Gastrocnemius medialis (tissue), 4 donors: ENCODE measurements at regions of chr19 and their contacts with region 1.

Region 1: GRCh38 chr19:34974646-34975045 is 10.6 kb upstream of the ZNF792 start:
- DNase-seq: no peak
- ATAC-seq: no peak
- H3K4me3 ChIP-seq: no peak overlapping the region
- H3K27ac ChIP-seq: no peak overlapping the region
- H3K4me1 ChIP-seq: peaks cover 3 to 7% of the 10 kb centered on the region in 2 donors
- H3K27me3 ChIP-seq: no peaks in the 10 kb centered on the region
- CTCF ChIP-seq: no peak
- POLR2A ChIP-seq: no peak

Region 2: DNA sequence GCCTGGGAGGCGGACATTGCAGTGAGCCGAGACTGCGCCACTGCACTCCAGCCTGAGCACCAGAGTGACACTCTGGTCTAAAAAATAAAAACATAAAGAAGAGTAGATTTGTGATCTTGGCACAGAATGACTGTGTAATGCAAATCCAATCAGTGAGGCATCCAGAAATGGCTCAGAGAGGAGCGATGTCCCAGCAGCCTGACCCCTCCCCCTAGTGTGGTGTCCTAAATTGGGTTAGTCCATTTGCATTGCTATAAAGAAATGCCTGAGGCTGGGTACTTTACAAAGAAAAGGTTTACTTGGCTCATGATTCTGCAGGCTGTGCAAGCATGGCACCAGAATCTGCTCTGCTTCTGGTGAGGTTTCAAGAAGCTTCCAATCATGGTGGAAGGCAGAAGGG is 107.0 kb before region 1 on chr19:
- in situ Hi-C with region 1: no loop called
- intact Hi-C with region 1: no loop called
- DNase-seq: no peak
- ATAC-seq: no peak
- H3K4me3 ChIP-seq: no peak overlapping the region
- H3K27ac ChIP-seq: no peak overlapping the region
- H3K4me1 ChIP-seq: no peaks in the 10 kb centered on the region
- H3K27me3 ChIP-seq: no peaks in the 10 kb centered on the region
- CTCF ChIP-seq: no peak
- POLR2A ChIP-seq: no peak

Region 3: GRCh38 chr19:35013031-35013819 is 38.6 kb after region 1 on chr19:
- in situ Hi-C with region 1: loop called in 2 of 4 experiments (anchors 5 kb)
- intact Hi-C with region 1: loop called (anchors 1 kb)
- DNase-seq: peak; percentile 44 to 64
- ATAC-seq: peak in 1 of 2 donors; percentile 68
- H3K4me3 ChIP-seq: no peak overlapping the region
- H3K27ac ChIP-seq: peak overlapping the region in 2 of 4 donors; percentile 23 to 36
- H3K4me1 ChIP-seq: peaks cover 0 to 10% of the 10 kb centered on the region in 2 donors
- H3K27me3 ChIP-seq: no peaks in the 10 kb centered on the region
- CTCF ChIP-seq: peak; percentile 94 to 99 (median 96)
- POLR2A ChIP-seq: no peak

Region 4: DNA sequence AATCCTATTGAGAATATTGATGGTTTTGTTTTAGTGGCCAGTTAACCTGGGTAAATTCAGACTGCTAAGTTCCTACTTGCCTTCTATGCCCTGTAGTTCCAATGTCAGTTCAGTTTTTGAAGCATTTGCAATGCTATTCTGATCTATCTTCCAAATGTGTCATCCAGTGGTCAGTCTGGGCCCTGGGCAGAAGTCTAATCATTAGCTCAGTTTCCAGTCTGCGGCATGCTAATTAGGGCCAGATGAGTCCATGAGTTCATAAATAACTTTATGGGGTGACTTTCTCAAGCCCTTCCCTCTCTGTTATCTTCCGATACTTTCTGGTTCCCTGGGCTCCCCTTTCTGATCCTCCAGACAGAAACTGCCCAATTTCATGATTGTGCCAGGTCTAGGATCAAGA is 221.2 kb after region 1 on chr19:
- in situ Hi-C with region 1: no loop called
- intact Hi-C with region 1: no loop called
- DNase-seq: no peak
- ATAC-seq: no peak
- H3K4me3 ChIP-seq: no peak overlapping the region
- H3K27ac ChIP-seq: no peak overlapping the region
- H3K4me1 ChIP-seq: no peaks in the 10 kb centered on the region
- H3K27me3 ChIP-seq: no peaks in the 10 kb centered on the region
- CTCF ChIP-seq: no peak
- POLR2A ChIP-seq: no peak

Region 5: GRCh38 chr19:35357867-35358573 is 383.4 kb after region 1 on chr19 and contains the start of gene FFAR3:
- in situ Hi-C with region 1: no loop called
- intact Hi-C with region 1: no loop called
- DNase-seq: peak; percentile 5 to 17
- ATAC-seq: no peak
- H3K4me3 ChIP-seq: no peak within 1 kb of the TSS
- H3K27ac ChIP-seq: no peak within 1 kb of the TSS
- H3K4me1 ChIP-seq: no peaks in the 10 kb centered on the region
- H3K27me3 ChIP-seq: no peaks in the 10 kb centered on the region
- CTCF ChIP-seq: no peak
- POLR2A ChIP-seq: no peak
- total RNA-seq, gene FFAR3: not detected